ENCODE measurements at regions of chr7 and their contacts with region 1.

Region 1: GRCh38 chr7:120950539-120951308 is at the start of gene ING3:
- DNase-seq: peak; percentile 96
- H3K4me3 ChIP-seq: peak within 1 kb of the TSS; percentile 89
- H3K27ac ChIP-seq: peak within 1 kb of the TSS; percentile 93
- H3K27me3 ChIP-seq: no peaks in the 10 kb centered on the region
- CTCF ChIP-seq: no peak
- polyA plus RNA-seq, gene ING3: 9.8 and 14.5 TPM in 2 replicates

Region 2: DNA sequence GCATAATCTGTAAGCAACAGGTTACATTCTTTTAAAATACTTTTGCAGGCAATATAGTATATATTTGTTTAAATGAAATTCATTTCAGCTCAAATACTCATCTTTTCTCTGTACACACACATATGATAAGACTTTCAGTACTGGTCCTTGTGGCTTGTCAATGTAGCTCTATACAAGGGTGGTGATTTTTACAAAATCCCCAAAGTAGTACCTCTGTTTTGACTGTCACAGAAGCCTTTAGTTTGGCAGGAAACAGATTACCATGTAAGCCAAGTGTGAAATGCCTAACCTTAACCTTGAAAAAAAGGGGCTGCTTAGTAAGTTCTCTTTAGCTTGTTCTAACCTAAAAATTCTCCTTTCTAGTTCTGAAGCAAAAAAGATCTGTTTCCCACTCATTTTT is 589.8 kb before region 1 on chr7:
- CTCF ChIA-PET with region 1: no interaction called
- POLR2A ChIA-PET with region 1: no interaction called
- DNase-seq: no peak
- H3K4me3 ChIP-seq: no peak overlapping the region
- H3K27ac ChIP-seq: no peak overlapping the region
- H3K27me3 ChIP-seq: no peaks in the 10 kb centered on the region
- CTCF ChIP-seq: no peak

Region 3: DNA sequence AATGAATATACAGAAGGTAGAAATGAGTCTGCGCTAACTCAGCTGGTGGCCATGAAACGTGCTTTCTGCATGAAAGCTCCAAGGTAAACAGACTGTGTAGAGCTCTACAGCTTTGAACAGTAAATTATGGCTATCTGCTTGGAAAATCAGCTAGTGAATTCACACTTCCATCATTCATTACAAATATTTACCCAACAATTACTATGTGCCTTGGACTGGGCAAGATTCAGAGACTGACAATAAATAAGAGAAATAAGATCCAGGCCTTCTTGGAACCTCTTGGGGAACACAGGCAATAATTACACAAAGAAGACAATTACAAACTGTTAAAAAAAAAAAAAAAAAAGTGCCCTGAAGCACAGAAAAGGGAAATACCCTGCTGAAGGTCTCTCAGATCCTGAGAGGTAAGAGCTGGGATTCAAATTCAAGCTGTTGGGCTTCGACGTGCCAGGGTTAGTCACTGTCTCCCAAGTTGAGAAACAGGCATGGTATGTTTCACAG is 108.6 kb before region 1 on chr7:
- CTCF ChIA-PET with region 1: no interaction called
- POLR2A ChIA-PET with region 1: interaction called, 10 read pairs
- DNase-seq: no peak
- H3K4me3 ChIP-seq: no peak overlapping the region
- H3K27ac ChIP-seq: no peak overlapping the region
- H3K27me3 ChIP-seq: no peaks in the 10 kb centered on the region
- CTCF ChIP-seq: no peak